ENCODE measurements at regions of chr7 and their contacts with region 1.

Region 1: GRCh38 chr7:73612598-73613269 is 11.6 kb downstream of the MLXIPL start:
- DNase-seq: no peak
- CTCF ChIP-seq: peak; percentile 10

Region 2: DNA sequence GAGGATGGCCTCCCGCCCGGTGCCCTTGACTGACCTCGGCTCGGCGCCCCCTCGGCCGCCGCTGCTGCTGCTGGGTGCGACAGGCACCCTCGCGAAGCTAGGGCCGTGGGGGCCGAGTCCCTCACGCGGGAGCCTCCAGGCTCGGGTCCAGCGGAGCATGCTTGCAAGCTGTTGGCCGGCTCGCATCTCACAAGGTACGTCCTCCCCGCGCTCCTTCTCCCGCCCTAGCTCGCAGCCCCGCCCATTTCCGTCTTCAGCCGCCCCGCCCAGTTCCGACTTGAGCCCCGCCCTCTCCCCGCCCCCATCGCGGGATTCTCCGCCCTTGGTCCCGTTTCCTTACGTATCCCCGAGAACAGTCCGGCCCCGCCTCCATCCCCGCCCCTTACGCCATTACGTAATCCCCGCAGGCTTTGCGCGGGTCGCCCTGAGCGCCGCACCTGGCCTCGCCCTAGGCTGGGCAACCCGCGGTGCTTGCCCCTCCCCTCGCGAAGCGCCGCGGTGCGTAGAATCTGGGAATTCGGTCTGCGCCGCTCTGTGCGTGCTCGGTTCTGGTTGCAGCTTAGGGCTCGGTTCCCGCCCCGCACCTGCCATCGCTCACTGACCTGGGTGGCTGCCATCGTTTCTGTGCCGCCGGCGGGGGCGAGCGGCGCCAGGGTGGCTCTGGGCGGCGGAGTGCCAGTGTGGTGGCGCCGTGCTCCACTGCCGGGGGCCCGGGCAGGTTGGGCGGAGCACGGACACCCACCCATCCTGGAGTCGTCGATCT is 126.1 kb after region 1 on chr7 and contains the start of gene ABHD11:
- in situ Hi-C with region 1: loop called (anchors 10 kb)
- DNase-seq: peak; percentile 100
- CTCF ChIP-seq: no peak

Measured in GM13977 (cell line).